ENCODE measurements at regions of chr6 and their contacts with region 1.

Region 1: GRCh38 chr6:108782179-108783041 is 65.8 kb upstream of the ARMC2 start:
- DNase-seq: peak; percentile 63
- H3K4me3 Mint-ChIP-seq: peak overlapping the region; percentile 65
- H3K27ac Mint-ChIP-seq: no peak overlapping the region
- H3K4me1 Mint-ChIP-seq: peaks cover 14% of the 10 kb centered on the region
- H3K27me3 Mint-ChIP-seq: peaks cover 58% of the 10 kb centered on the region

Region 2: GRCh38 chr6:108541838-108542759 is 240.3 kb before region 1 on chr6:
- intact Hi-C with region 1: loop called (anchors 1 kb)
- DNase-seq: peak; percentile 52
- H3K4me3 Mint-ChIP-seq: no peak overlapping the region
- H3K27ac Mint-ChIP-seq: no peak overlapping the region
- H3K4me1 Mint-ChIP-seq: peaks cover 10% of the 10 kb centered on the region
- H3K27me3 Mint-ChIP-seq: peaks cover 39% of the 10 kb centered on the region

Region 3: GRCh38 chr6:108565893-108566292 is 216.5 kb before region 1 on chr6:
- intact Hi-C with region 1: loop called (anchors 1 kb)
- DNase-seq: no peak
- H3K4me3 Mint-ChIP-seq: no peak overlapping the region
- H3K27ac Mint-ChIP-seq: no peak overlapping the region
- H3K4me1 Mint-ChIP-seq: peaks cover 36% of the 10 kb centered on the region
- H3K27me3 Mint-ChIP-seq: peaks cover 51% of the 10 kb centered on the region

Region 4: GRCh38 chr6:108630050-108630714 is 152.2 kb before region 1 on chr6:
- intact Hi-C with region 1: loop called (anchors 5 kb)
- DNase-seq: no peak
- H3K4me3 Mint-ChIP-seq: peak overlapping the region; percentile 3
- H3K27ac Mint-ChIP-seq: peak overlapping the region; percentile 9
- H3K4me1 Mint-ChIP-seq: peaks cover 31% of the 10 kb centered on the region
- H3K27me3 Mint-ChIP-seq: peaks cover 10% of the 10 kb centered on the region

Region 5: DNA sequence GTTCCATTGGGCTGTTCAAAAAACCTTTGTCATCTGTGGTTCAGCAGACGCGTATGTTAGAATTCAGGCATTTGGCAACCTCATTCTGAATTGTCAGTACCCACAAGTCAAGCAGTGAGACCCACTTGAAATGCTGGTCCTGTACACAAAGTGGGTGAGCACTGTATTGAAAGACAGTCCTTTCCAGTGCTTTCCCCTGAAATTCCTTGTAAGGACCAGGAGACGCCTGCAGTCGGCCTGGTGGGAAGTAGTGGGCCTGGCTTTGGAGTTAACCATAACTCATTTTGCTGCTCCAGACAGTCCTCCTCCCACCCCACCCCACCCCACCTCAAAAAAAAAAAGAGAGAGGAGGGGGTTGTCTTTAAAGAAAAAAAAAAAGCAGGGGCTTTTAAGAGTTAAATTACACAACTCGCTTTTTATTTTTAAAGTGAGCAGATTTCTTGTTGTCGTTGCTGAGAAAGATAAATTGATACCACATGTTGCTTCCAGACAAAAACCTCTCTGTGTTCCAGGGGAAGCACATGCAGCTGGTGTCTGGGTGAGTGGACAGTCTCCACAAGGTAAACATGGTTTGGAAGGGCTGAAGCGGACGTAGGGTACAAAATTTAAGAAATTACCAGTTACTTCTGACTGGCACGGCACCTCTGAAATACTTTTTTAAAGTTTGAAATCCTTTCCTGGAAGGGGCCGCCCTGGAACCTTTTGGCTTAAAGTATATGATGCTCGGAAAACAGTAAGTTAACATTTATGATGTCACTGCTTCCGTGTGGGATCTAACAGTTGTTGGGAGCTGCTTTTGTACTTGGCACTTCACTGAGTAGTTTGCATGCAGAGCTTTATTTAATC is 126.4 kb before region 1 on chr6:
- intact Hi-C with region 1: no loop called
- DNase-seq: no peak
- H3K4me3 Mint-ChIP-seq: no peak overlapping the region
- H3K27ac Mint-ChIP-seq: no peak overlapping the region
- H3K4me1 Mint-ChIP-seq: peaks cover 7% of the 10 kb centered on the region
- H3K27me3 Mint-ChIP-seq: peaks cover 7% of the 10 kb centered on the region

Region 6: DNA sequence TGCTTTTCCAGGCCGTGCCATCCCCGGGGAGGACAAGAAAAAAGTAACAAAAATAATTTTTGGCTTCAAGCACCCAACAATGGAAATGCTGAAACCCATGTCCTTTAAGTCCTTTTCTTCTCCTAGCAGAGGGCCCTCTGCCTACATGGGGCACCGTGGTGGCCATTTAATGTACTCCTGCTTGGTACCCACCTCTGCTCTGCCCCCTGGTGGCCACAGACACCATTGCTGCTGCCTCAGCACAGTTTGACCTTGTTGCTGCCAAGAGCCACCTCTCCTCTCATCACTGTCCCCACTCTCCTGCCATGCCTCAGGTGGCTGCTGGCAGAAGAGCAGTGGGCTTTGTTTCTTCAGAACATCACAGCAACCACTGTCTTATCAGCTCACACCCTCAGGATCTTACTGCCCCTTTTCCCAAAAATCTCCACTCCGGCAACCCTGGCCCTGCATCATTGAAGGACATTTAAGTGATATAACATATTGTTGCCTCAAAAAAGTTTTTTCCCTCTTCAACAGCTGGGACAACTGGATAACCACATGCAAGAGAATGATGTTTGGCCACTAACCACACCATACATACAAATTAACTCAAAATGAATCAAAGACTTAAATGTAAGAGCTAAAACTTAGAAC is 52.9 kb after region 1 on chr6:
- intact Hi-C with region 1: loop called (anchors 1 kb)
- DNase-seq: peak; percentile 74
- H3K4me3 Mint-ChIP-seq: no peak overlapping the region
- H3K27ac Mint-ChIP-seq: no peak overlapping the region
- H3K4me1 Mint-ChIP-seq: peaks cover 32% of the 10 kb centered on the region
- H3K27me3 Mint-ChIP-seq: peaks cover 16% of the 10 kb centered on the region

Measured in activated T-helper 1 cell treated with anti-CD3 and anti-CD28 coated beads, Interleukin-12 subunit alpha, Interleukin-12 subunit beta, Interleukin-2, Interleukin-4 antibody, amounts not matched to agents 30 ng/mL and 10 ng/mL and 1 ng/mL, durations not matched to agents 14 hours and 24 hours and 36 hours (primary cell).